PC-3 (cell line): ENCODE measurements at regions of chr1 and their contacts with region 1.

Region 1: DNA sequence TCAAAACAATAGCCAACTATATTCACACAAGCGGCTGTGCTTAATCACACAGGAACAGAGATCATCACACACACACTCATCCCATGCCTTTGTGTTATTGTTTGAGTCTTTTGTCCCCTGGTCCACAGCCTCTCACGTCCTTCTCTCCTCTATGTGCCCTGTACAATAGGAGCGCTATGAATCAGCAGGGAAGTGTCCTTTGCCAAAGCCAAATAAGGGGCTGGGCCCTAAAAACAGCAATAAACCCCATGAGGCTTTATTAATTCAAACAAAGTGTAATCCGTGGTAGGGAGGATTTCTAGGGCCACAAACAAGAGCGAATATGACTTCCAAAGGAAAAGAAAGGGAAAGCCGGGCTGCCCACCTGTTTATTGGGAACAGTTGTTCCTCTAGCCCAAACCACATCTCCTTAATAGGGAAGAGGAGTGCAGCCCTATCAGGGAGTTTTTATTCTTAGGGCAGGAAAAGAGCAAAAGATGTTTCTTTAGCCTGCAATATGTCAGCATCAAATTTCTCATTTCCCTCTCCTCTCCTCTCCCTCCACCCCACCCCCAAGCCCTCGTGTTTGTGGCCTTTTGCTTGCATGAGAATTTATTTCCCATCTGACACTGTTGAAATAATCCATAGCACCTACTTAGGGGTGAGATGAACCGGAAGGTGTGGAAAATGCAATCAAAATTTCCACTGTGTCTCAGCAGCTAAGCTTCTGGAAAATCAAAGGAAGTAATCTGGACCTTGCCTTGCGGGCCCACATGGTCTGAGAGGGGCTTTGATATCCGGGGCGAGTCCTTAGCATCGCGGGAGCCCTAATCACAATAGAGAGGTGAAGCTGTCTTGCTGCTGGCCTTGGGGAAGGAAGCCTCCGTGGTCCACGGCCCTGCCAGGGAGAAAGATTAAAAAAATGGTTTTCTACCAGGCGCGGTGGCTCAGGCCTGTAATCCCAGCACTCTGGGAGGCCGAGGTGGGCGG is 45.3 kb upstream of the ITPKB start:
- DNase-seq: peak; percentile 93
- ATAC-seq: peak; percentile 98
- H3K4me3 ChIP-seq: no peak overlapping the region
- H3K27ac ChIP-seq: peak overlapping the region; percentile 52
- H3K4me1 ChIP-seq: peaks cover 24% of the 10 kb centered on the region
- H3K27me3 ChIP-seq: no peaks in the 10 kb centered on the region
- CTCF ChIP-seq: no peak

Region 2: DNA sequence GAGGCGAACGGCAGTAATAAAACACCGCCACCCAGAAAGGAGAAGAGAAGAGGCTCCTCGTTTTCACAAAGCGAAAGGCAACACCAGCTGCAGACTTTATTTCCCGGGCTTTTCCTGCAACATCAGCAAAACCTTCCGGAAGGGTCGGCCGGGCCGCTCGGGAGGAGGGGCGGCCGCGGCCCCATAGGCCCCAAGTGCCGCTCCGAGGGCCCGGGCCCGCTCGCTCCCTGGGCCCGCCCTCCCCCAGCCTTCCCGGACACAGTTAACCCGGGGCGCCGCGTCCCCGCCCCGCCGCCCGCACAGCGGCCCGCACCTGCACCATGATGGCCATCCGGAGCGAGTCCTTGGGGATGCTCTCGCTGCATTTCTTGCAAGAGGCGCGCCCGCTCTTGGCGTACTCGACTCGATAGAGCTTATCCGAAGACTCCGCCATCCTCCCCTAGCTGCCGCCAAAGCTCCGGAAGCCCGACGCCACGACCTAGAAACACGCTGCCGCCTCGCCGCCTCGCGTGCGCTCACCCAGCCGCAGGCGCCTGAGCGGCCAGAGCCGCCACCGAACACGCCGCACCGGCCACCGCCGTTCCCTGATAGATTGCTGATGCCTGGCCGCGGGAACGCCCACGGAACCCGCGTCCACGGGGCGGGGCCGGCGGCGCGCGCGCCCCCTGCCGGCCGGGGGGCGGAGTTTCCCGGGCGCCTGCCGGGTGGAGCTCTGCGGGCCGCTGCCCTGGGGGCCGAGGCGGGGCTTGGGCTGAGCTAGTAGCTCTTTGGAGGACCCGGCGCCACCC is 376.7 kb before region 1 on chr1 and contains the start of gene PARP1:
- CTCF ChIA-PET with region 1: no interaction called
- POLR2A ChIA-PET with region 1: interaction called, 26 read pairs
- intact Hi-C with region 1: no loop called
- DNase-seq: peak; percentile 99
- ATAC-seq: peak; percentile 85
- H3K4me3 ChIP-seq: peak within 1 kb of the TSS; percentile 79
- H3K27ac ChIP-seq: peak within 1 kb of the TSS; percentile 56
- H3K4me1 ChIP-seq: peaks cover 35% of the 10 kb centered on the region
- H3K27me3 ChIP-seq: no peaks in the 10 kb centered on the region
- CTCF ChIP-seq: peak; percentile 82
- total RNA-seq, gene PARP1: 536 and 538 TPM in 2 replicates

Region 3: GRCh38 chr1:226814751-226815496 is 30.6 kb after region 1 on chr1:
- CTCF ChIA-PET with region 1: interaction called, 3 read pairs
- POLR2A ChIA-PET with region 1: interaction called, 3 read pairs
- intact Hi-C with region 1: loop called (anchors 1 kb)
- DNase-seq: peak; percentile 100
- ATAC-seq: peak; percentile 97
- H3K4me3 ChIP-seq: peak overlapping the region; percentile 8; the same call in 1 of the 2 replicates
- H3K27ac ChIP-seq: peak overlapping the region; percentile 90
- H3K4me1 ChIP-seq: peaks cover 35% of the 10 kb centered on the region
- H3K27me3 ChIP-seq: no peaks in the 10 kb centered on the region
- CTCF ChIP-seq: no peak